Common myeloid progenitor, CD34-positive (primary cell): ENCODE measurements at regions of chr12 and their contacts with region 1.

Region 1: DNA sequence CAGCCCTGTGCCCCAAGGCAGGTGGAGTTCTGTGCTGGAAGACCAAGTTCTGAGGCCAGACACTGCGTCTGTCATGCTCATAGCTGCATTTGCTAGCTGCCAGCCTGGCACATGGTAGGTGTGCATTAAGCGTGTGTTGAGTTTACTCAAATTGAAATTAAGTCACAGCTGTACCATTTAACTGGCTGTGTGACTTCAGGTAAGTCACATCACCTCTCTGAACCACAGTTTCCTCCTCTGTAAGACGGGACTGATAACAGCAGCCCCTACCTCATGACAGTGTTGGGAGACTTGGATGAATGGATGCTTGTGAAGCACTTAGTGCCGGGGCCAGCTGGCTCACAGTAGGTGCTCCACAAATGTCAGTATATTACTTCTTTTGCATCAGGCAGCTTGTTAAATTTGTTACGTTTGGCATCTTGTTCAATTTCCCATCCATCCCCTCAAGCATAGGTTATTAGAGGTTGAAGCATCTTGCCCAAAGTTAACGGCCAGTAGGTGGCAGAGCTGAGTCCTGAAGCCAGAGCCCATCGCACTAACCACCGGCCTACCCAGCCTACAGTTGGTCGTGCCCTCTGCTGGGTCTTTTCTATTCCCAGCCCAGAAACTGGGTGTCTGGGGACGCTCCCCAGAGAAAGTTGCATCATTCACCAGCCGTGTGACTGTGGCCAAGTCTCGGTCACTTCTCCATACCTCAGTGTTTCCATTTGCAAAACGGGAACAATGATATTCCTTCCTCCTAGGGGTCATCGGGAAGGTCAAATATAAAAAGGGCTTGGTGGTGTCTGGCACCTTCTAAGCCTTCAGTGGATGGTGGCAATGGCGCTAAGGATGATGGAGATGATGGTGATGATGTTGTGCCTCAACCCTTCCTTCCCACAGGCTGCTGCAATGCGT is 4.5 kb downstream of the DAO start:
- DNase-seq: peak; percentile 69 to 87 (median 78)
- H3K4me3 ChIP-seq: no peak overlapping the region
- H3K27ac ChIP-seq: no peak overlapping the region
- H3K4me1 ChIP-seq: no peaks in the 10 kb centered on the region
- H3K27me3 ChIP-seq: no peaks in the 10 kb centered on the region

Region 2: GRCh38 chr12:108846290-108846701 is 38.1 kb before region 1 on chr12:
- CTCF ChIA-PET with region 1: no interaction called
- POLR2A ChIA-PET with region 1: no interaction called
- DNase-seq: no peak
- H3K4me3 ChIP-seq: no peak overlapping the region
- H3K27ac ChIP-seq: no peak overlapping the region
- H3K4me1 ChIP-seq: peaks cover 4 to 36% (median 9%) of the 10 kb centered on the region in 4 experiments
- H3K27me3 ChIP-seq: no peaks in the 10 kb centered on the region

Region 3: GRCh38 chr12:108896366-108897216 is 12.2 kb after region 1 on chr12:
- CTCF ChIA-PET with region 1: interaction called, 12 read pairs
- POLR2A ChIA-PET with region 1: no interaction called
- DNase-seq: peak; percentile 59 to 81 (median 60)
- H3K4me3 ChIP-seq: peak overlapping the region in 1 of 7 experiments; percentile 50
- H3K27ac ChIP-seq: no peak overlapping the region
- H3K4me1 ChIP-seq: peaks cover 4 to 11% (median 8%) of the 10 kb centered on the region in 4 experiments
- H3K27me3 ChIP-seq: no peaks in the 10 kb centered on the region

Region 4: DNA sequence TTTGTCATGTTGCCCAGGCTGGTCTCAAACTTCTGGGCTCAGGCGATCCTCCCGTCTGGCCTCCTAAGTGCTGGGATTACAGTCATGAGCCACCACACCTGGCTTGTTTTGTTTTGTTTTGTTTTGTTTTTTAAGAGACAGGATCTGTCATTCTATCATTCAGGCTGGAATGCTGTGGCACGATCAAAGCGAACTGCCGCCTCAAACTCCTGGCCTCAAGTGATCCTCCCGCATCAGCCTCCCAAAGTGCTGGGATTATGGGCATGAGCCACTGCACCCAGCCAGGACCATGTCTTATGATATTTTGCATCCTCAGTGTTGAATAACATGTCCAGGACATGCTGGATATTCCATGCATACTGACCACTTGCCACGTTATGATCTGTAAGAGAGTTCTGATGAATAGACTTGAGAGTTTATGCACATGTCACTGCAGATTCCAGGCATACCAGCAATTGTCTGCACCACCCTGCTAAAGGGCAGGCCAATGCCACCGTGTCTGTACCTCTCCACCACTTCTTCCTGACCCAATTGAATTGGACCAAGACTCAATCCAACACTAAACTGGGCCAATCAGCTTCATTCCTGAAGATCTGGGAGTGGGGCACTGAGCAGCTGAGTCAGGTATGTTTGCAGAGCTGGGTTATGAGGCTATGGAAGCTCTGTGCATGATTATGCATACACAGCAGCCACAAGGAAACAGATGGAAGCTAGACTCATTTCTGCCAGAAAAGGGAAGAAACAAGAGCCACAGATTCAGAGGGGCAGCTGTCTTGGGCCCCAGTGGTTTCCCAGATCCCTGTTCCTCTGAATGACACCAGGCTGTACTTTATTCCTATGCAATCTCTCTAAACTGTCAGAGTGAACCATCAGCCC is 23.4 kb after region 1 on chr12:
- CTCF ChIA-PET with region 1: interaction called, 10 read pairs
- POLR2A ChIA-PET with region 1: no interaction called
- DNase-seq: peak; percentile 56 to 95 (median 91)
- H3K4me3 ChIP-seq: peak overlapping the region in 1 of 7 experiments; percentile 20
- H3K27ac ChIP-seq: no peak overlapping the region
- H3K4me1 ChIP-seq: peaks cover 21 to 68% (median 59%) of the 10 kb centered on the region in 4 experiments
- H3K27me3 ChIP-seq: no peaks in the 10 kb centered on the region